ENCODE measurements at regions of chr22 and their contacts with region 1.

Region 1: GRCh38 chr22:30159561-30160353 is 79.5 kb downstream of the HORMAD2 start:
- DNase-seq: no peak
- H3K4me3 Mint-ChIP-seq: peak overlapping the region; percentile 51
- H3K27ac Mint-ChIP-seq: peak overlapping the region; percentile 98
- H3K4me1 Mint-ChIP-seq: peaks cover 73% of the 10 kb centered on the region
- H3K27me3 Mint-ChIP-seq: no peaks in the 10 kb centered on the region

Region 2: GRCh38 chr22:29994027-29994715 is 165.6 kb before region 1 on chr22:
- intact Hi-C with region 1: no loop called
- DNase-seq: no peak
- H3K4me3 Mint-ChIP-seq: no peak overlapping the region
- H3K27ac Mint-ChIP-seq: no peak overlapping the region
- H3K4me1 Mint-ChIP-seq: peaks cover 8% of the 10 kb centered on the region
- H3K27me3 Mint-ChIP-seq: no peaks in the 10 kb centered on the region

Region 3: GRCh38 chr22:30121960-30122359 is 37.8 kb before region 1 on chr22:
- intact Hi-C with region 1: loop called (anchors 5 kb)
- DNase-seq: no peak
- H3K4me3 Mint-ChIP-seq: peak overlapping the region; percentile 31
- H3K27ac Mint-ChIP-seq: peak overlapping the region; percentile 62
- H3K4me1 Mint-ChIP-seq: peaks cover 43% of the 10 kb centered on the region
- H3K27me3 Mint-ChIP-seq: no peaks in the 10 kb centered on the region

Region 4: GRCh38 chr22:30132290-30132996 is 27.3 kb before region 1 on chr22:
- intact Hi-C with region 1: loop called (anchors 2 kb)
- DNase-seq: no peak
- H3K4me3 Mint-ChIP-seq: no peak overlapping the region
- H3K27ac Mint-ChIP-seq: peak overlapping the region; percentile 70
- H3K4me1 Mint-ChIP-seq: peaks cover 29% of the 10 kb centered on the region
- H3K27me3 Mint-ChIP-seq: no peaks in the 10 kb centered on the region

Region 5: DNA sequence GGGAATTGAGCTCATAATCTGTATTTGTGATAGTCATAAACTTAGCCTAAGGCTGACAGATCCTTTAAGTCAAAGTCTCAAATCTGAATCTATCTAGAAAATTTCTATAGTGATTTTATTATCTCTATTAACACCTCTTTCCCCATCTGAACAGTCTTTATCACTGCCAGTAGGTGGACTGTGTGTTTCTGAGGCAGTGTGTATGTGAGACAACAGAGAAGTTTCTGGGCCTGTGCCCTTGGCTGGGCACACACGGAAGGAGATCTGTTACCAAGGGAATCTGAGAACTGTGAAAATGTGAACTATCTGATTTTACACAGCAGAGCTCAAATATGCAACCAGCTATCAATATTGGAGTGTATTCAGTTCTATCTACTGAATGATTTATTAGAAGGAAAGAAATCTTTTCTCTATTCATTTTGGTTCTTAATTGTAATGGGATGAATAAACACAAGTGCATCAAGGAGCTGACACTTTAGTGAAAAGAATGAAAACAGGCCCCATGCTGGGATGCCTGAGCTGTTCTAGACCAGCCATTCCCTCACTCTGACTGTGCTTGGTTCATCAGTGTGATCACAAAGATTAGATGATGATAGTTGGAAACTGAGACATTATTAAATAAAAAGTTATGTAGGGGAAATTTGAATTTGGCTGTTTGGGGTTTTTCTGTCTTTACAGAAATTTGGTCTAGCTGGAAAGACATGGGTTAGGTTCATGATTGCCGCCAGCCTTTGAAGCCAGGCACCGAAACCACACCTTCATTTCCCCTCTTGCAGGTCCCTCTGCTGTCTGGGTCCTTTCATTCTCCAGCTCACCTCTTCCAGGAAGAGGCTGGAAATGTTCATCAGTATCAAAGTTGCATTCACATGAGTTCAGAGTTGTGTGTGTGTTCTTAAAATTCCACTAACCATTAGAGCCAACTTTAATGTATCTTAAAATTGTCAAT is 18.7 kb after region 1 on chr22:
- intact Hi-C with region 1: loop called (anchors 1 kb)
- DNase-seq: no peak
- H3K4me3 Mint-ChIP-seq: no peak overlapping the region
- H3K27ac Mint-ChIP-seq: peak overlapping the region; percentile 98
- H3K4me1 Mint-ChIP-seq: peaks cover 76% of the 10 kb centered on the region
- H3K27me3 Mint-ChIP-seq: no peaks in the 10 kb centered on the region

Region 6: DNA sequence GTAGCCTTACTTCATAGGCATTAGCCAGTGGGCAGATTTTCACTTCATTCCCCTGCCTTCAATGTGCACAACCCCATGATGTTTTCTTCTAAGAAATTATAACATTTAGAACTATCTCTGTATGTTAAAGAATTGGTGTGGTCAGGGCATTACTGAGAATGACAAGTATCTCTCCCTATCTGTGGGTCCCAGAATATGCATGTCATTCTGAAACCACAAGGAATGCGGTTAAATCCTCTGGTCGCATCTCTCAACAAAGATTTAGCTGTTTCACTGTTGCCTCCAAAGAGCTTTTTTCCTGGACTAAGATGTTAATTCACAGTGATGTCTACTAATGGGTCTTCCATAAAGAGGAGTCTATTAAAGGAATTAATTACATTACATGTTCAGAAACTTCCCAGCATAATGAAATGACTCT is 24.1 kb after region 1 on chr22:
- intact Hi-C with region 1: loop called (anchors 1 kb)
- DNase-seq: peak; percentile 37
- H3K4me3 Mint-ChIP-seq: peak overlapping the region; percentile 58
- H3K27ac Mint-ChIP-seq: peak overlapping the region; percentile 98
- H3K4me1 Mint-ChIP-seq: peaks cover 84% of the 10 kb centered on the region
- H3K27me3 Mint-ChIP-seq: no peaks in the 10 kb centered on the region

Region 7: GRCh38 chr22:30196141-30196879 is 36.6 kb after region 1 on chr22:
- intact Hi-C with region 1: loop called (anchors 5 kb)
- DNase-seq: no peak
- H3K4me3 Mint-ChIP-seq: peak overlapping the region; percentile 33
- H3K27ac Mint-ChIP-seq: peak overlapping the region; percentile 92
- H3K4me1 Mint-ChIP-seq: peaks cover 73% of the 10 kb centered on the region
- H3K27me3 Mint-ChIP-seq: no peaks in the 10 kb centered on the region